Kidney (tissue), 22 donors: ENCODE measurements at regions of chr12 and their contacts with region 1.

Region 1: GRCh38 chr12:3275171-3276041 is 198.2 kb downstream of the TSPAN9 start:
- DNase-seq: peak; percentile 74 to 88 (median 81)
- H3K4me3 ChIP-seq: no peak overlapping the region
- H3K27ac ChIP-seq: no peak overlapping the region
- H3K4me1 ChIP-seq: peaks cover 0 to 13% (median 0%) of the 10 kb centered on the region in 3 donors
- H3K27me3 ChIP-seq: no peaks in the 10 kb centered on the region
- CTCF ChIP-seq: peak; percentile 95

Region 2: DNA sequence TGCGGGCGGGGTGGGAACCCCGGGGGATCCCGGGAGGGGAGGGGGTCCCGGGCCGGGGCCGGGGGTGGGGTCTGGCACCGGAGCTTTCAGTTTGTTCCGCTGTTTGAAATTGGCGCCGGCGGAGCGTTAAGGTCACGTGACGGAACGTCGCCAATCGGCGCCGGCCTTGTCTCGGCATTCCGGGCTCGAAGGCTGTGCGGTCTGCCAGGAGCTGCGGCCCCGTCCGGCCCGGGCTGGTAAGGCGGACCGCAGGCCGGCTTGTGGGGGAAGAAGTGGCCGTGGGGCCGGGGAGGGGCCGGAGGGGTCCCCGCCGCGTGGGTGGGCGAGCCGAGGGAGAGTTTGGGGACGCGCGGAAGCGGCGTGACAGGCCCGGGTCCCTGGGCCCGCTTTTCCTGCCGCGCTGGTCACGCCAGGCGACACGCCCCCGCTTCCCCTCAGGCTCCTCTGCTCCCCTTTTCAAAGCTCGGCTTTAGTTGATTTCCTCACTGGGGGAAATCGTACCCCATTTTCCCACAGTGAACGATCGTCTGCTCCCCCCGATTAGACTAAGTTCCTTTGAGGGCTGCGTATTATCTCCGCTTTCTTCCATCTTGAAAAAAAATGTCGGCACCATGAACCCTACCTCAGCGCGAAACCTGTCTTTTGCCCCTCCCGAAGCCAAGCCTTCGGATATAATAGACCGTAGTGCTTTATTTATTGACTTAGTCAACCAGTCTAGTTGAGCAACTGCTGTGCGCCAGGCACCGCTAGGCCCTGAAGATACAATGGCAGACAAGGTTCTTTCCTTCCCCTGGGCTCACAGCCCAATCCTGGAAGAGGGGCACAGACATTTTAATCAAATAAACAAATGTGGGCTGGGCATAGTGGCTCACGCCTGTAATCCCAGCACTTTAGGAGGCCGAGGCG is 398.1 kb before region 1 on chr12 and contains the starts of genes FOXM1 and RHNO1:
- intact Hi-C with region 1: no loop called
- DNase-seq: peak; percentile 93 to 97 (median 95)
- H3K4me3 ChIP-seq: peak within 1 kb of the TSS; percentile 87 to 96 (median 94)
- H3K27ac ChIP-seq: peak within 1 kb of the TSS; percentile 89 to 92
- H3K4me1 ChIP-seq: peaks cover 0 to 16% (median 3%) of the 10 kb centered on the region in 3 donors
- H3K27me3 ChIP-seq: no peaks in the 10 kb centered on the region
- CTCF ChIP-seq: peak; percentile 32
- total RNA-seq, gene FOXM1: 1.3 TPM
- total RNA-seq, gene RHNO1: 17.2 TPM

Region 3: GRCh38 chr12:3073438-3074250 is 201.8 kb before region 1 on chr12:
- intact Hi-C with region 1: loop called (anchors 10 kb)
- DNase-seq: peak; percentile 90 to 94 (median 93)
- H3K4me3 ChIP-seq: no peak overlapping the region
- H3K27ac ChIP-seq: peak overlapping the region in 1 of 2 donors; percentile 29
- H3K4me1 ChIP-seq: peaks cover 0 to 24% (median 15%) of the 10 kb centered on the region in 3 donors
- H3K27me3 ChIP-seq: no peaks in the 10 kb centered on the region
- CTCF ChIP-seq: peak; percentile 99

Region 4: DNA sequence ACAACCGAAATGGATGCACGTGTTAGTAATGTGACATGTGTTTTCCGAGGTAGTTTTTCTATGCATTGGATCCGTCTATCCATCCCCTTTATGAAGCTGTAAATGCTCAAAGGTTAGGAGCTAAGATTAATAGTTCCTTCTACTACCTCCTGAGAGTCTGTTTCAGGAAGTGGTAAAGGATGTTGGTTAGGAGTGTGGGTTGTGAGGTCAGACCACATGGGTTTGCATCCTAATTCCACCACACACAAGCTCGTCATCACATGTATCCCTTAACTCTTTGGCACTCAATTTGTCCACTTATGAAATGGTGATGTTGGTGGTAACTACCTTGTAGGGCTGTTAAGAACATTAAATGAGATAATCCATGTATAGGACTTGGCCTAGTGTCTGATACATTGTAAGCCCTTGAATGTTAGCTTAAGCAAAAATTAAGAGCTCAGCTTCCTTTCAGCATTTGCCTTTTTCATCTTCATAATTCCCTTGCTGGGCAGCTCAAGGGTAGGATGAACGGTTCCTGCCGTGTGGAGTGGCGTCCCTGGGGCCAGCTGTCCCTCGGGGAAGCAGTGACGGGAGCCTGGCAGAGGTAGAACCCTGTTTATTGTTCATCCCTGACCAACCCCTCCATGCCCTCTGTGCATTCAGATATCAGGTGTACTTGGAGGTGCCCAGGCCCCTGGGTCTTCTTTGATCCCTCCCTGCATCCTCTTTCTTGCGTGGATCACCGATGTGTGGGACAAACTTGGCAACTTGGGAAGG is 145.9 kb before region 1 on chr12:
- intact Hi-C with region 1: loop called (anchors 5 kb)
- DNase-seq: peak in 1 of 5 donors; percentile 24
- H3K4me3 ChIP-seq: no peak overlapping the region
- H3K27ac ChIP-seq: peak overlapping the region; percentile 80 to 90
- H3K4me1 ChIP-seq: peaks cover 4 to 37% (median 26%) of the 10 kb centered on the region in 3 donors
- H3K27me3 ChIP-seq: no peaks in the 10 kb centered on the region
- CTCF ChIP-seq: no peak